Activated CD4-positive, alpha-beta T cell treated with anti-CD3 and anti-CD28 coated beads for 36 hours (primary cell): ENCODE measurements at regions of chr3 and their contacts with region 1.

Region 1: DNA sequence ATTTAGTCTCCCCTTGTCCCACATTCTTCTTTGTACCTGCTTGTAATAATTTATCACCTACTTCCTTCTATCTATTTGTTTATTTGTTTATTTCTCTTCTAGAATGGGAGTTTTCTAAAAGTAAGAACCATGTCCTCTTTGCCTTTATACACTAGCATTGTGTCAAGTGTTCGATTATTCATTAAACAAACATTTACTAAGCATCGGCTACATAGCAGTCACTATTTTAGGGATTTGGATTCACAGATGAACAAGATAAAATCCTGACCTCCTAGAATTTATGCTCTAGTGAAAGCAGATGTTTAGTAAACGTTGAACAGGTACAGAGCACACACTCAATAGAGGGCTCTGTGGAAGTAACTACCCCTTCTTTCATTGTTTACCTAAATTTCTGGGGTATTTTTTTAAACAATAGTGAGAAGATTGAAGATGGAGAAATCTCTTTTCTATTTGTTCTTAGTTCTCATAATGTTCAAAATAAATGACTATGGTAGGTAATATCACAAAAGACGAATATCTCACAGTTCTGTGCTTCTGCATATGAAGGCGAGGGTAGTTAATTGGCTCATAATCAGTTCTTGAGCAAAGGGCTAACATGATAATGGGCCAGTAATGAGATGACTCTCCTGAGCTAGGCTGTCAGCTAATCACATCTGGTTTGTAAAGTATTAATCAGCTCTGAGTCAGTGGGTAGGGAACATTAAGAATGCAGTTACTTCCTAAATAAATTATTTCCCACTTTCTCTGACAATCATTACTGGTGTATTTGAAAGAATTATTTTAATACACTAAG is 111.9 kb downstream of the SLC9A9 start:
- DNase-seq: no peak
- ATAC-seq: no peak
- H3K4me3 Mint-ChIP-seq: no peak overlapping the region
- H3K27ac Mint-ChIP-seq: no peak overlapping the region
- H3K4me1 Mint-ChIP-seq: no peaks in the 10 kb centered on the region
- H3K27me3 Mint-ChIP-seq: no peaks in the 10 kb centered on the region

Region 2: GRCh38 chr3:143595456-143596077 is 140.8 kb before region 1 on chr3:
- CTCF ChIA-PET with region 1: no interaction called
- POLR2A ChIA-PET with region 1: no interaction called
- intact Hi-C with region 1: no loop called
- DNase-seq: no peak
- ATAC-seq: no peak
- H3K4me3 Mint-ChIP-seq: no peak overlapping the region
- H3K27ac Mint-ChIP-seq: no peak overlapping the region
- H3K4me1 Mint-ChIP-seq: no peaks in the 10 kb centered on the region
- H3K27me3 Mint-ChIP-seq: no peaks in the 10 kb centered on the region

Region 3: GRCh38 chr3:143751643-143752178 is 15.3 kb after region 1 on chr3:
- CTCF ChIA-PET with region 1: interaction called, 12 read pairs
- POLR2A ChIA-PET with region 1: no interaction called
- intact Hi-C with region 1: no loop called
- DNase-seq: peak; percentile 39
- ATAC-seq: peak; percentile 84
- H3K4me3 Mint-ChIP-seq: peak overlapping the region; percentile 56
- H3K27ac Mint-ChIP-seq: peak overlapping the region; percentile 98
- H3K4me1 Mint-ChIP-seq: peaks cover 49% of the 10 kb centered on the region
- H3K27me3 Mint-ChIP-seq: no peaks in the 10 kb centered on the region

Region 4: GRCh38 chr3:143775459-143775858 is 39.1 kb after region 1 on chr3:
- CTCF ChIA-PET with region 1: no interaction called
- POLR2A ChIA-PET with region 1: no interaction called
- intact Hi-C with region 1: no loop called
- DNase-seq: peak; percentile 14
- ATAC-seq: peak; percentile 82
- H3K4me3 Mint-ChIP-seq: no peak overlapping the region
- H3K27ac Mint-ChIP-seq: no peak overlapping the region
- H3K4me1 Mint-ChIP-seq: peaks cover 3% of the 10 kb centered on the region
- H3K27me3 Mint-ChIP-seq: no peaks in the 10 kb centered on the region

Region 5: DNA sequence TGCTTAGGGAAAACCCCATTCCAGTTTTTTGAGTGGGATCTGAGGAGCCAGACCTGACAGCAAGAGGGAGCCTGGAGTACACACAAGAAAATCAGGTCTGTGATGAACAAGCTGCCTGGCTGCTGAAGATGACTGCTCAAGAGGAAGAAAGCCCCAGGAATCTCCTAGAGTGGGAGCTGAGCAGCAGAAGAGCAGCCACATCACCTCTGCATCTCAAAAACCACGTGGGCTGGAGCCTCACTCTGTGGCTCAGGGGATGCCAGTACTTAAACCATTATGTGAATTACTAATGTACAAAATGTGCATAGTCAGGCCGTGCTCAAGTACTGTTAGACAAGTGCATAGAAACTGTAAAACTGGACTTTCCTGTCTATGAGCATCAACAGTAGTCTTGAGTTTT is 59.5 kb after region 1 on chr3:
- CTCF ChIA-PET with region 1: no interaction called
- POLR2A ChIA-PET with region 1: no interaction called
- intact Hi-C with region 1: no loop called
- DNase-seq: no peak
- ATAC-seq: no peak
- H3K4me3 Mint-ChIP-seq: no peak overlapping the region
- H3K27ac Mint-ChIP-seq: no peak overlapping the region
- H3K4me1 Mint-ChIP-seq: no peaks in the 10 kb centered on the region
- H3K27me3 Mint-ChIP-seq: no peaks in the 10 kb centered on the region

Region 6: GRCh38 chr3:143806038-143806437 is 69.6 kb after region 1 on chr3:
- CTCF ChIA-PET with region 1: no interaction called
- POLR2A ChIA-PET with region 1: no interaction called
- intact Hi-C with region 1: no loop called
- DNase-seq: no peak
- ATAC-seq: no peak
- H3K4me3 Mint-ChIP-seq: no peak overlapping the region
- H3K27ac Mint-ChIP-seq: no peak overlapping the region
- H3K4me1 Mint-ChIP-seq: peaks cover 4% of the 10 kb centered on the region
- H3K27me3 Mint-ChIP-seq: no peaks in the 10 kb centered on the region